SK-N-SH (cell line): ENCODE measurements at regions of chr18 and their contacts with region 1.

Region 1: GRCh38 chr18:60684843-60685513 is 312.4 kb upstream of the MC4R start:
- DNase-seq: peak; percentile 34
- H3K4me3 ChIP-seq: no peak overlapping the region
- H3K27ac ChIP-seq: no peak overlapping the region
- H3K4me1 ChIP-seq: peaks cover 0 to 3% of the 10 kb centered on the region in 2 experiments; a peak in 1 of 4 replicates
- H3K27me3 ChIP-seq: no peaks in the 10 kb centered on the region
- CTCF ChIP-seq: peak; percentile 76
- EP300 ChIP-seq: no peak
- RAD21 ChIP-seq: peak; percentile 86

Region 2: GRCh38 chr18:60623331-60623730 is 61.6 kb before region 1 on chr18:
- CTCF ChIA-PET with region 1: no interaction called
- POLR2A ChIA-PET with region 1: no interaction called
- DNase-seq: no peak
- H3K4me3 ChIP-seq: no peak overlapping the region
- H3K27ac ChIP-seq: peak overlapping the region in 1 of 2 experiments; percentile 75; a peak in 2 of 4 replicates
- H3K4me1 ChIP-seq: no peaks in the 10 kb centered on the region; a peak in 2 of 4 replicates
- H3K27me3 ChIP-seq: no peaks in the 10 kb centered on the region
- CTCF ChIP-seq: no peak
- EP300 ChIP-seq: no peak
- RAD21 ChIP-seq: no peak

Region 3: GRCh38 chr18:60668583-60668982 is 16.4 kb before region 1 on chr18:
- CTCF ChIA-PET with region 1: interaction called, 17 read pairs
- POLR2A ChIA-PET with region 1: no interaction called
- DNase-seq: no peak
- H3K4me3 ChIP-seq: no peak overlapping the region
- H3K27ac ChIP-seq: no peak overlapping the region
- H3K4me1 ChIP-seq: no peaks in the 10 kb centered on the region
- H3K27me3 ChIP-seq: no peaks in the 10 kb centered on the region
- CTCF ChIP-seq: peak; percentile 36
- EP300 ChIP-seq: no peak
- RAD21 ChIP-seq: peak; percentile 65

Region 4: GRCh38 chr18:60809937-60810336 is 125.0 kb after region 1 on chr18:
- CTCF ChIA-PET with region 1: interaction called, 13 read pairs
- POLR2A ChIA-PET with region 1: no interaction called
- DNase-seq: no peak
- H3K4me3 ChIP-seq: no peak overlapping the region
- H3K27ac ChIP-seq: no peak overlapping the region
- H3K4me1 ChIP-seq: no peaks in the 10 kb centered on the region
- H3K27me3 ChIP-seq: no peaks in the 10 kb centered on the region
- CTCF ChIP-seq: no peak
- EP300 ChIP-seq: no peak
- RAD21 ChIP-seq: no peak

Region 5: GRCh38 chr18:61489334-61489733 is 804.4 kb after region 1 on chr18:
- CTCF ChIA-PET with region 1: interaction called, 10 read pairs
- POLR2A ChIA-PET with region 1: no interaction called
- DNase-seq: no peak
- H3K4me3 ChIP-seq: no peak overlapping the region
- H3K27ac ChIP-seq: no peak overlapping the region
- H3K4me1 ChIP-seq: peaks cover 0 to 2% of the 10 kb centered on the region in 2 experiments; a peak in 2 of 4 replicates
- H3K27me3 ChIP-seq: no peaks in the 10 kb centered on the region
- CTCF ChIP-seq: no peak
- EP300 ChIP-seq: no peak
- RAD21 ChIP-seq: no peak